PC-9 (cell line): ENCODE measurements at regions of chr11 and their contacts with region 1.

Region 1: DNA sequence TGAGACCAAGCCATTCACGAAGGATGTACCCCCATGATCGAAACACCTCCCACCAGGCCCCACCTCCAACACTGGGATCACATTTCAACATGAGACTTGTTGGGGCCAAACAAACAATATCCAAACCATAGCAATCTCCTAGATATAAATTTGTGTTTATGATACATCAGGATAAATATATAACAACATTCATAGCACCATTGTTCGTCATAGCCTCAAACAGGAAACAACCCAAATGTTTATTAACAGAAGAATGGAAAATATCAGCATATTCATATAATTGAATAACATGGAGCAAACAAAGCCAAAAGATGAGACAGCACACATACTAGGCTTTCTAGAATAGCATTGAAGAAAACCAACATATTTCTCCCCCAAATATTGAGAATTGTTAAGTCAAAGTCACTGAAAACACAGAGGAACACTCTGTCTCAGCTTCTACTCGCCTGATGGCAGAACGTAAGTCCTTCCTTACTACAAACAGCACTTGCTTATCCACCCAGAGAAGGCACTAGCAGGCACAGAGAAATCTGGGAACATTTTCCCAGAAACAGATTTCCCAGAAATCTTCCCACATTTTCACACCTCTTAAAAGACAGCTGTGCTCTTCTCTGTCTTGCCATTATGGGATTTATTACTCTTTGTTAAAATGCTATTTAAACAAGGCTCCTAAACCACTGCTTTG is 8.1 kb upstream of the GDPD4 start:
- DNase-seq: no peak
- H3K4me3 ChIP-seq: no peak overlapping the region
- H3K27ac ChIP-seq: no peak overlapping the region
- H3K4me1 ChIP-seq: no peaks in the 10 kb centered on the region
- H3K27me3 ChIP-seq: no peaks in the 10 kb centered on the region
- CTCF ChIP-seq: no peak

Region 2: GRCh38 chr11:78338138-78338537 is 1028.6 kb after region 1 on chr11:
- CTCF ChIA-PET with region 1: no interaction called
- POLR2A ChIA-PET with region 1: interaction called, 14 read pairs
- intact Hi-C with region 1: no loop called
- DNase-seq: no peak
- H3K4me3 ChIP-seq: no peak overlapping the region
- H3K27ac ChIP-seq: no peak overlapping the region
- H3K4me1 ChIP-seq: no peaks in the 10 kb centered on the region
- H3K27me3 ChIP-seq: no peaks in the 10 kb centered on the region
- CTCF ChIP-seq: no peak